Activated B cell treated with CpG ODN at 0.5 μM for 24 hours (primary cell): ENCODE measurements at regions of chr1 and their contacts with region 1.

Region 1: GRCh38 chr1:230917284-230918135 is 49.2 kb upstream of the C1orf198 start:
- DNase-seq: peak; percentile 36
- ATAC-seq: peak; percentile 79
- H3K4me3 Mint-ChIP-seq: no peak overlapping the region
- H3K27ac Mint-ChIP-seq: peak overlapping the region; percentile 11
- H3K4me1 Mint-ChIP-seq: no peaks in the 10 kb centered on the region
- H3K27me3 Mint-ChIP-seq: no peaks in the 10 kb centered on the region
- CTCF ChIP-seq: peak; percentile 52

Region 2: DNA sequence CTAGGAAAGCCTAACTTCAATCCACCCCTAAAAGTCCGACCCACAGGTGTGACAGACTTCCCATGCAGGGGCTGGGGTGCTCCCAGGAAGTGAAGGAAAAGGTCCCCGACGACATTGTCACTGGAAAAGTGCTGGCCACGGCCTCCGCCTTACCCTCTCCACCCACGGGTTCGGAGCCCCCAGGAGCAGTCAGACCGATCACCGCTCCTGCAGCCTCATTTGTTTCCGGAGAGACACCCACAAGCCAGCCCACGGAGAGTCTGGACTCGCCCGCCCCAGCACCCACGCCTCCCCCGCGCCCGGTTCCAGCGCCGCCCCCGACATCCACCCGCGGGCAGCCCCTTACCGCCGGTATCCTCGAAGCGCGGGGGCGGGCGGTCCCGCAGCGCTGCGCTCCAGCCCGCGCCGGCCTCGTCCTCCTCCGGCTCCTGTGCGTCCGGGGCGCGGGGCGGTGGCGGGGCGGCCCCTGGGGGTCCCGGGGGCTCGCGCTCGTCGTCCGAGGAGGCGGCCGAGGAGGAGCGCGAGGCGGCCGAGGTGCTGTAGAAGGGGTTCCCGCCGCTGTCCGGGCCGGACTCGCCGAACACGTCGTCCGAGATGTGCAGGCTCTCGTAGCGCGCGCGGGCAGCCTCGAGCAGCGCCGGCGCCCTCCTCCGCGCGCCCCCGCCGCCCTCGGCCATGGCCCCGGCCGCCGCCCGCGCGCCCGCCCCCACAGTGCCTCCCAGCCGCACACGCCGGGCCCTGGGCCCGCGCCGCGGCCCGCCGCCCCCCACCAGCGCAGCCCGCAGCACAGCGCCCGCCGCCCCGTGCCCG is 492.1 kb before region 1 on chr1:
- CTCF ChIA-PET with region 1: no interaction called
- POLR2A ChIA-PET with region 1: no interaction called
- intact Hi-C with region 1: no loop called
- DNase-seq: no peak
- ATAC-seq: no peak
- H3K4me3 Mint-ChIP-seq: peak overlapping the region; percentile 68
- H3K27ac Mint-ChIP-seq: no peak overlapping the region
- H3K4me1 Mint-ChIP-seq: peaks cover 12% of the 10 kb centered on the region
- H3K27me3 Mint-ChIP-seq: peaks cover 64% of the 10 kb centered on the region
- CTCF ChIP-seq: no peak

Region 3: DNA sequence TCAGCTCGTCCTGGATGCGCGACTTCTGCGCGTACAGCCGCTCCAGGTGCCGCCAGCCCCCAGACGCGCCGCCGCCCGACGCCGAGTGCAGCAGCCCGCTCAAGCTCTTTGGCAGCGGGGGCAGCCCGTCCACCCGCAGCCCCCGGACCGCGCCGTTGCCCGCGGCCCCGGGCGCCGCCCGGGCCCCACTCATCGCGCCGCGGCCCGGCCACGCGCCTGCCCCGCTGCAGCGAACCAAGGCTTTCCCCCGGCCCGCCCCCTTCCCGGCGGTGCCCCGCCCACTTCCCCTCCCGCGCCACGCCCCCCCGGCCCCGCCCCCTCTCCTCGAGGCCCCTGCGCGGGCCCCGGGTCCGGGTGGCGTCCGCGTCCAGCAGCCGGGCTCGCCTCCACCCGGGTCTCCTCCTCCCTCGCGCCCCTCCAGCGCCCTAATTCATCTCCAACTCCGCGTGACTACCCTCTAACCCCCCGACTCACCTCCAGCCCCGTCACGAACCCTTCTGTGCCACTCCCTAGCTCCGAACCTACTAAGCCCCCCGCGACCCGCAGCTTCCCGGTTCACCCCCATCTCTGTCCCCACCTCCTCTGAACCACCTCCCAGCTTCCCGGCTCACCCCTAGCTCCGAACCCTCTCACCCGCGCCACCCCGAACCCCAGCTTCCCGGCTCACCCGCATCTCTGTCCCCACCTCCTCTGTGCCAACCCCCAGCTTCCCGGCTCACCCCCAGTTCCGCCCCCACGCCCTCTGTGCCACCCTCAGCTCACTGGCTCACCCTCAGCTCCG is 122.7 kb after region 1 on chr1 and contains the start of gene FAM89A:
- CTCF ChIA-PET with region 1: no interaction called
- POLR2A ChIA-PET with region 1: no interaction called
- intact Hi-C with region 1: loop called (anchors 5 kb)
- DNase-seq: peak; percentile 70
- ATAC-seq: peak; percentile 84
- H3K4me3 Mint-ChIP-seq: peak within 1 kb of the TSS; percentile 85
- H3K27ac Mint-ChIP-seq: peak within 1 kb of the TSS; percentile 35
- H3K4me1 Mint-ChIP-seq: peaks cover 17% of the 10 kb centered on the region
- H3K27me3 Mint-ChIP-seq: peaks cover 4% of the 10 kb centered on the region
- CTCF ChIP-seq: no peak
- total RNA-seq, gene FAM89A: 5.2 and 5.3 TPM in 2 replicates

Region 4: GRCh38 chr1:231091831-231092301 is 174.4 kb after region 1 on chr1:
- CTCF ChIA-PET with region 1: interaction called, 6 read pairs
- POLR2A ChIA-PET with region 1: no interaction called
- intact Hi-C with region 1: loop called (anchors 1 kb)
- DNase-seq: no peak
- ATAC-seq: no peak
- H3K4me3 Mint-ChIP-seq: no peak overlapping the region
- H3K27ac Mint-ChIP-seq: no peak overlapping the region
- H3K4me1 Mint-ChIP-seq: no peaks in the 10 kb centered on the region
- H3K27me3 Mint-ChIP-seq: peaks cover 33% of the 10 kb centered on the region
- CTCF ChIP-seq: no peak